ENCODE measurements at regions of chr6 and their contacts with region 1.

Region 1: DNA sequence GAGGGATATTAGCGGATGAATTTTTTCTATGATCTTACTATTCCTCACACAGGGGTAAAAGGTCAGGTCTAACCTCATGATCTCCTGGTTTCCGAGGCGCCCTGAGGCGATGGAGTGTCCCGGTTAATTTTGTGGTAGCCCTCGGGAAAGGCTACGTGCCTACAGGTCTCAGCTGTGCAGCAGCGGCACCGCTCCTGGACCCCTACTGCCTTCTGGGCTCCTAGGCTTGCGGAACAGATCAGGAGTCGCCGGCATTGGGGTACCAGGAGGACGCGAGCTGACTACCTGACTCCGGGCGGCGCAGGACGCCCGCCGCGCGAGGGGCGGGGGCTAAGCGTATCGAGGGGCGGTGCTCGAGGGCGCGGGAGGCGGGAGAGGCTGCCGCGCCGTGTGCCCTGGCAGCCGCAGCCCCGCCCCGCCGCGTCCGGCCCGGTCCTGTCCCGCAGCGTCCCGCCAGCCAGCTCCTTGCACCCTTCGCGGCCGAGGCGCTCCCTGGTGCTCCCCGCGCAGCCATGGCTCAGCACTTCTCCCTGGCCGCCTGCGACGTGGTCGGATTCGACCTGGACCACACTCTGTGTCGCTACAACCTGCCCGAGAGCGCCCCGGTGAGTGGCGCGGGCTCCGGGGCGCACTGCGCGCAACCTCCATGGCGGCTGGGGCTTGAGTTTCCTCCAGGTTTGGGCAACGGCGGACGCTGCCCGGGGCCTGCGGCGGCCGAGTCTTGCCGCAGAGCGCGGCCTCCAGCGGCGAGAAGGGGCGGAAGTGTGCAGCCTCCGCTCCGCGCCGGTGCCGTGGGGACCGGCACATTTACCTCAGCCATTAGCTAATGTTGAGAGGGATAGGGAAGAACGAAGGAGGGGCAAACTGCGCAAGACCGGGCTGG is at the start of gene NT5DC1:
- DNase-seq: peak; percentile 79 to 90
- ATAC-seq: peak; percentile 90 to 95 (median 91)
- H3K4me3 ChIP-seq: peak within 1 kb of the TSS; percentile 64
- H3K4me3 Mint-ChIP-seq: peak within 1 kb of the TSS; percentile 92
- H3K27ac ChIP-seq: peak within 1 kb of the TSS; percentile 81
- H3K27ac Mint-ChIP-seq: peak within 1 kb of the TSS; percentile 76 to 89
- H3K4me1 ChIP-seq: peaks cover 19% of the 10 kb centered on the region
- H3K4me1 Mint-ChIP-seq: peaks cover 31 to 47% of the 10 kb centered on the region in 2 donors
- H3K27me3 ChIP-seq: no peaks in the 10 kb centered on the region
- H3K27me3 Mint-ChIP-seq: no peaks in the 10 kb centered on the region
- CTCF ChIP-seq: peak; percentile 44
- total RNA-seq, gene NT5DC1: 19.1 to 29.4 (median 20.5) TPM

Region 2: DNA sequence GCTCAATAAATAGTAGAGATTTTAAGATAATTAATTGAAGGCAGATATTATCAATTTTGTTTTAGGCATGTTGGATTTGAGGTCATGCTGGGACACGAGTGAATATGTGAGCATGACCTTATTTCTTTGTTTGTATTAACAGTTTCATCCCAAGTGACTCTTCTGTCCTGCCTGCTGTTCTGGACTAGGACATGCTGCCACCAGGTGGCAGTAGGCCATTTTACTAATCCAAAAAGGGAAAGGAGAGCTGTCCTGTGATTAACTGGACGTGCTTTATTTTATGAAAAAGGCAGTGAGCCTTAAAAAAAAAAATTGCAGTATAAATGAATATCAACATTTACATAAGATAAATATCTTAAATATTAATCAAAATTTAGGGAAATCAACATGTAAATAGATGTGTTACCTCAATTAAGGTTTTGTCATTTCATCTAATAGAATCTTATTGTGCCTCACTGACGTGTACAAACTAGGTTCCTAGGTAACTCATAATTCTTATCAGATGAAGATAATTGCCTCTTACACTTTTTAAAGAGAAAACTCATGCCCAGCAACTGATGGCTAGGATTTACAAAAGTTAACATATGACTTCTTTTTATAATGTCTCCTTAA is 89.8 kb before region 1 on chr6:
- intact Hi-C with region 1: loop called (anchors 1 kb)
- DNase-seq: peak in 1 of 2 donors; percentile 66
- ATAC-seq: peak in 1 of 3 donors; percentile 34
- H3K4me3 ChIP-seq: no peak overlapping the region
- H3K4me3 Mint-ChIP-seq: no peak overlapping the region
- H3K27ac ChIP-seq: no peak overlapping the region
- H3K27ac Mint-ChIP-seq: no peak overlapping the region
- H3K4me1 ChIP-seq: no peaks in the 10 kb centered on the region
- H3K4me1 Mint-ChIP-seq: no peaks in the 10 kb centered on the region
- H3K27me3 ChIP-seq: no peaks in the 10 kb centered on the region
- H3K27me3 Mint-ChIP-seq: peaks cover 0 to 10% of the 10 kb centered on the region in 2 donors
- CTCF ChIP-seq: peak; percentile 62

Region 3: DNA sequence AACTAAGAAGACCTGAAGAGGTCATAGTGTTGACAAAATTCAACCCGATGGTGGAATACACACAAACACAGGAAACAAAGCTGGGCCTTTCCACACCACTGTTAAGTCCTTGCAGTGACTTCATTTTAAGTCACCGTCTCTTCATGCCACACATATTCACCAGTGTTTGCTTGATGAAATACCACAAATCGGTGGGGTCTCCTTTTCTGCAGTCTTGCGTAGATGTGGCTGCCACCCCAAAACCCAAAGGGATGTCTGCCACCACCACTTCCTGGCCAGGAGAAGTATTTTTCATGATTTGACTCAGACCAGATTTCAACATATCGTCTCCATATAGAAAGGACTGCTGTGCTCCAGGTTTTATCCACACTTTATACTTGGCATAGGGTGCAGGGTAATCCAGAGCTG is 36.3 kb after region 1 on chr6:
- intact Hi-C with region 1: loop called (anchors 1 kb)
- DNase-seq: peak; percentile 53
- ATAC-seq: peak; percentile 84 to 95 (median 86)
- H3K4me3 ChIP-seq: no peak overlapping the region
- H3K4me3 Mint-ChIP-seq: peak overlapping the region; percentile 63
- H3K27ac ChIP-seq: no peak overlapping the region
- H3K27ac Mint-ChIP-seq: peak overlapping the region; percentile 77 to 81
- H3K4me1 ChIP-seq: peaks cover 15% of the 10 kb centered on the region
- H3K4me1 Mint-ChIP-seq: peaks cover 20 to 27% of the 10 kb centered on the region in 2 donors
- H3K27me3 ChIP-seq: no peaks in the 10 kb centered on the region
- H3K27me3 Mint-ChIP-seq: no peaks in the 10 kb centered on the region
- CTCF ChIP-seq: no peak

Region 4: DNA sequence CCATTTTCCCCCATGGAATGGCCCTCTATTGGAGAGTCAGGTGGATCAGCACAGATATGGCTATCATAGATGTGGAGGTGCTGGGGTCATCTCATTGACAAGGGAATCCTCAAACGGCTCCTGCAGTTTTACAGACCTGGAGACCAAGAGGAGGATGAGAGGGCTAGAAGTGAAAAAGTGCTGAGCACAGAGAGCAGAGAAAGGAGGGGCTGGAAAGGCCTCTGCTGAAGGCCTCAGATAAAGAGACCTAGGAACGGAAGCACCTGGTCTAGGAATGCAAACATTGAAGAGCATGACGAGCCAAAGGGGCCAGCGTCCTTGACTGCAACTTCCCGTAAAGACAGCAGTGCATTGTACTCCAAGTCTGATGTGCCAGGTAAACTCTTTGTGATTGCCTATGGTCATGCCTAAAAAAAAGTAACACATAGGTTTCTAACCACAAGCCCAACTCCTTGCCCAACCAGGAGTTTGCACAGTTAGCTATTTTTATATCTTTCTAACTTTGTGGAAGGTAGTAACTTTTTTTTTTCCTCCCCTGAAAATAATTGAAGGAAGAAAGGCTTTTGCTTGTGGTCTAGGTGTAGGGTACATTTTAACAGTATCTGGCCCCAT is 530.8 kb after region 1 on chr6:
- intact Hi-C with region 1: no loop called
- DNase-seq: no peak
- ATAC-seq: peak in 1 of 3 donors; percentile 10
- H3K4me3 ChIP-seq: no peak overlapping the region
- H3K4me3 Mint-ChIP-seq: no peak overlapping the region
- H3K27ac ChIP-seq: no peak overlapping the region
- H3K27ac Mint-ChIP-seq: peak overlapping the region in 1 of 2 donors; percentile 50
- H3K4me1 ChIP-seq: peaks cover 5% of the 10 kb centered on the region
- H3K4me1 Mint-ChIP-seq: peaks cover 5 to 17% of the 10 kb centered on the region in 2 donors
- H3K27me3 ChIP-seq: no peaks in the 10 kb centered on the region
- H3K27me3 Mint-ChIP-seq: no peaks in the 10 kb centered on the region
- CTCF ChIP-seq: no peak

Measured in natural killer cell (primary cell).